HAP-1 (cell line): ENCODE measurements at regions of chr9 and their contacts with region 1.

Region 1: DNA sequence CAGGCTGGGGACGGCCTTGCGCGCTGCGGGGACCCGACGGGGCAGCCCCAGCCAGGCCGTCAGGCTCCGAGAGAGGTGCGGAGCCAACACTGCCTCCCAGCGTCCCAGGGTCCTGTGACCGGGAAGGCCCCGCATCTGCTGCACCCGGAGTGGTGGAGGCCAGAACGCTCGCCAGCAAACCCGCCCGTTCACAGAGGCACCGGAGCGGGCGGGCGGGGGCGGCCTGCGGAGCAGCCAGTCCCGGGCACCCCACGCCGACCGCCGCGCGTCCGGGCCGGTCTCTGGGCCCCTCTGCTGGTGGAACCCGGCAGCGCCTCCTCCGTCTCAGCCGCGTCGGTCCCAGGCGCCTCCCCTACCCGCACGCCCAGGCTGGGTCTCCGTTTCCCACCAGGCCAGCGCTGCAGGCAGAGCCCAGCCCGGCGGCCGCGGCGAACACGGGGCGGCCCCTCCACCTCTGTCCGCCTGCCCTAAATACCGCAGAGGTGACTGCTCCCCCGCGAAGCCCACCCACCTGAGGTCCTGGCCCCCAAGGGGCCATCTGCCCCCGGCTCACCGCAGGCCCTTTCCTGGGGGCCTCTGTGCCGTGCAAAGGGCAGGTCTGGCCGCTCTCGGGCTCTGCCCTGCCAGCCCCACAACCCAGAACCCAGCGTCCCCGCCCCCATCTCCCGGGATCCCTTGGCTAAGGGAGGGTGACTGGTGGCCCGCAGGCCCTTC is 15.9 kb downstream of the EXD3 start:
- DNase-seq: peak; percentile 21 to 82
- H3K4me3 ChIP-seq: peak overlapping the region; percentile 20
- H3K4me1 ChIP-seq: no peaks in the 10 kb centered on the region
- H3K27me3 ChIP-seq: no peaks in the 10 kb centered on the region

Region 2: DNA sequence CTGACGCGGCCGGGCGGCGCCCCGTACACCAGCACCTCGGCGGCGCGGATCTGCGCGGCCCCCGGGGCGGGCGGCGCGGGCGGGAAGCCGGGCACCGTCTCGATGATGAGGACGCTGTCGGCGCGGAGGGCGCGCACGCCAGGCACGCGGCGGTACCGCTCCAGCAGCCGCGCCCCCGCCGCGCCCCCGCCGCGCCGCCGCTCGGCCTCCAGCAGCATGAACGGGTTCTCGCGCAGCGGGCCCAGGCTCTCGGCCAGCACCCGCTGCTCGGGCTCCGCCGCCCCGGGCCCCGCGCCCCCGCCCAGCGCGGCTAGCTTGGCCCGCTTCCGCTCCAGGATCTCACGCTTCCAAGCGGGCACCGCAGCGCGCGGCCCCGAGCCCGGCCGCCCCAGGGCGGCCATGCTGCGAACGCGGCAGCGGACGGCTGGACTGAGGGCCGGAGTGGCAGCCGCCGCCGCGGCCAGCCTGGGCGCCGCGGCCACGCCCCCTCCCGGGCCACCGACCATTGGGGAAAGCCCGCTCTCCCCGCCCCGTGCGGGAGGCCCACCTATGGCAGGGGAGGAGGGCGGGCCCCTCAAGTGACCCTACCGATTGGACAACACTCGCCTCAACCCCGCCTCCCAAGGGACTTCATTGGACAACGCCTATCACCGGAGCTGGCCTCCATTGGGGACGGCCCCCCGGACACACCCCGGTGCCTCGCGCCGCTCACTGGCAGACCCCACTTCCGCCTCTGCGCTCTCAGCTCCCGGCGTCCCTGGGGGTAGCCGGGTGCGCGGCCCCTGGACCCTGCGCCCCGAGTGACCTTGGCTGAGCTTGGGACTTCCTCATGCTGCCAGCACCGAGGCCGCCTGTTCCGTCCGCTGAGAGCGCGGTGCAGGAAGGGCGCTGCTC is 206.5 kb before region 1 on chr9 and contains the start of gene TPRN:
- in situ Hi-C with region 1: no loop called
- DNase-seq: peak; percentile 99 to 100
- H3K4me3 ChIP-seq: peak within 1 kb of the TSS; percentile 58
- H3K4me1 ChIP-seq: peaks cover 32% of the 10 kb centered on the region
- H3K27me3 ChIP-seq: no peaks in the 10 kb centered on the region

Region 3: DNA sequence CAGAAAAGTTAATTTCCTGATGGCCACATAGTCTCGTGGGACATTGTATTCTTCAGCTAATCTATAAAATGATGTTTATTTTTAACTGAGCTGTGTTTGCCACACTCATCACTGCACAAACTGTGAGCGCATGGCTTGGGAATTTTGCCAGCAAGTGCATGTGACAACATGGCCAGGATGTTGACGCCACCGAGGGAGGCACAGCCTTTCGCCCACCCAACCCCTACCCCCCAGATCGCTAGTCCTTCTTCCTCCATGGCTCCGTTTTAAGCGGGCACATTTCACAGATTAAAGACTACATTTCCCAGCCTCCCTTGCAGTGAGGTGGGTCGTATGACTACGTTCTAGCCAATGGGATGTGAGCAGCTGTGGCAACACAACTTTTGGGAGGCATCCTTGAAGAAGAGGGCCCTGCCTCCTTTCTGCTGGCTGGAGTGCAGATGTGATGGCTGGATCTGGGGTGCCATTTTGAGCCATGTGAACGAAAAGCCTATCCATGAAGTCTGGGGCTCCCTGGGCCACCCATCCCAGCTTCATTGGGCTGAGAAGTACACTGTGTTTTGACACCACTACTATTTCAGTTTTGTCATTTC is 112.8 kb before region 1 on chr9:
- in situ Hi-C with region 1: loop called (anchors 5 kb)
- DNase-seq: peak in 1 of 2 experiments; percentile 60
- H3K4me3 ChIP-seq: no peak overlapping the region
- H3K4me1 ChIP-seq: peaks cover 6% of the 10 kb centered on the region
- H3K27me3 ChIP-seq: no peaks in the 10 kb centered on the region